HCT116 (cell line): ENCODE measurements at regions of chr15 and their contacts with region 1.

Region 1: DNA sequence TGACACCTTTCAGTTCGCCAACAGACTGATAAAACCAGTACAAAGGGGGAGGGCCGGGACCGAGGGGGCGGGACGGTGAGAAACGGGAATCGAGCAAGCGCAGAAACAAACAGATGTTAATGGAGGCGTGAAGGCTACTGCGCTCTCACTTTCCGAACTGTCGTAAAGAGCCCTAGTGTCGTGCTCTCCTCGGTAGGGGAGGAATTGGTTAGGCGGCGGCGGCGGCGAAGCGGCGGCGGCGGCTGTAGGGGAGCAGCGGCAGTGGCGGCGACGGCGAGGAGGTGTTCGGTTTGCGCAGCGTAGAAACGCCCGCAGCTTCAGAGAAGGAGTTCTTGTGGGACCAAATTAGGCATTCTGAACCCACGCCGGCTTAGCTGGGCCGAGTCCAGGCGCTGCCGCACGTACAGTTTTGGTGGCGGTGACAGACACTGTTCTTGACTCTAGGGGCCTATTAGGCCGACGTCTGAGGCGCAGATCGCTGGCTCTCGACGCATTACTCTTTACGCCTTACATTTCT is at the start of gene RNF111:
- DNase-seq: peak; percentile 94
- ATAC-seq: peak; percentile 87
- H3K4me3 ChIP-seq: peak within 1 kb of the TSS; percentile 94 to 97
- H3K27ac ChIP-seq: peak within 1 kb of the TSS; percentile 85
- H3K4me1 ChIP-seq: peaks cover 2 to 14% of the 10 kb centered on the region in 2 experiments; a peak in 3 of 4 replicates
- H3K27me3 ChIP-seq: no peaks in the 10 kb centered on the region
- CTCF ChIP-seq: no peak
- POLR2A ChIP-seq: no peak
- RAD21 ChIP-seq: no peak
- total RNA-seq, gene RNF111: 31.5 TPM

Region 2: GRCh38 chr15:59632714-59633113 is 645.2 kb after region 1 on chr15:
- CTCF ChIA-PET with region 1: no interaction called
- POLR2A ChIA-PET with region 1: no interaction called
- RAD21 ChIA-PET with region 1: no interaction called
- intact Hi-C with region 1: loop called (anchors 10 kb)
- DNase-seq: no peak
- ATAC-seq: peak; percentile 94
- H3K4me3 ChIP-seq: no peak overlapping the region
- H3K27ac ChIP-seq: no peak overlapping the region
- H3K4me1 ChIP-seq: no peaks in the 10 kb centered on the region
- H3K27me3 ChIP-seq: no peaks in the 10 kb centered on the region
- CTCF ChIP-seq: peak; percentile 44 to 66 (median 55); a peak in 5 of 6 replicates
- POLR2A ChIP-seq: no peak
- RAD21 ChIP-seq: peak; percentile 56